HepG2 (cell line): ENCODE measurements at regions of chr11 and their contacts with region 1.

Region 1: DNA sequence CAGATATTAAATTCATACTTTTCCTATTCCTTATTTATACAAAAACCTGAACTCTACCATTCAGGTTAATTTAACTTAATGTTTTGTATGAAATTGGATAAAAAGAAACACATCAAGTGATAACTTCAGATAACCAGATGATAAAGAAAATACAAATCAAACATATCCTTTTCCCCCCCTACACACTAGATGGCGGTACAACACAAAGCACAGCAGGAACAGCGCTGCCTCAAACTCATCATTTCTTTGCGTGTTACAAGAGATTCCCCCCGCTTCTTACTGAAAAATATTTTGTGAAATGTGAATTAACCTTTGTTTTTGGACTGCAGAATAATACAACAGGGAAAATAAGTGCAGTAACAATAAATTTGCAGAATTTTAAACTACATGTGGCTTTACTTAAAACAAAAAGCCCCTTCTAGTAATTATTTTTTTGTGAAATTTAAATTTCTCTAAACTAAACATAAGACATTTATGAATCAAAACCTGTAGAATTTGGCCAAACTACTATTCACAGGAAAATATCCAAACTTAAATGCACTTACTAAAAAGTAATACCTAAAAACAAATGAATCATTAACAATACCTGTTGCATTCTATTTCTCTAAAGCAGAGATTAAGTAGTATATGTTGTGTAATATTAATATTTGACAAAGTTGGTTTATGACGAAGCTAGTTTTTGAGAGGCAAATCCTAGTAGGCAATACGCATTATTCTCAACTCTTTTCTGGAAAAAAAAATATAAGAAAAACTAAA is 74.4 kb downstream of the ARHGAP32 start:
- DNase-seq: peak; percentile 64
- ATAC-seq: peak; percentile 39; the same call in 1 of the 3 replicates
- H3K4me3 ChIP-seq: no peak overlapping the region
- H3K27ac ChIP-seq: no peak overlapping the region
- H3K4me1 ChIP-seq: peaks cover 40% of the 10 kb centered on the region
- H3K27me3 ChIP-seq: no peaks in the 10 kb centered on the region
- CTCF ChIP-seq: peak; percentile 87
- EP300 ChIP-seq: no peak
- POLR2A ChIP-seq: no peak
- RAD21 ChIP-seq: peak; percentile 83

Region 2: DNA sequence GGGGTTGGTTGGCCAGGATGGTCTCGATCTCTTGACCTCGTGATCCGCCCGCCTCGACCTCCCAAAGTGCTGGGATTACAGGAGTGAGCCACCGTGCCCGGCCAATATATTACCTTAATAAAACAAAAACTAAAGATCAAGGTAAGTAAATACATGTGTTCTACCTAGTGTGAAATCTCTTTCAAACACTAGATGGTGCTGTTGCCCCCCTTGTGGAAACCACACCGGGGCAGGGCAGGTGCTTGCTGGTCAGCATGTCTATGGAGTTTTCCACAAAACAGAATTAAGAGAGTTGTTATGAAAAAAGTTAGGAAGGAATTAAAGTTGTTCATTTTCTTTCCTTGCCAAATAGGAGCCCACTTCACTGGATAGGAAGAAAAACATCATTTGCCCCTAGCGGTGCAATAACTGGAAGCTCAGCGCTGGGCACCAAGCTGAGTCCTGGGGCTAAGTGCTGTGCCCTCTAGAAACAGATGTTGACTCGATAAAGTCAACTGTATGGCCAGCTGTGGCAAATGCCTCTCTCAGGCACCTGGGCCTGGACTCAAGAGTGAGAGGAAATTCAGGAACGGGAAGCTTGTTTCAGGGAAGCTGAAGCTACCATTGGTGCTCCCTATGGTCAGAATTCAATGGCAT is 233.0 kb before region 1 on chr11:
- CTCF ChIA-PET with region 1: no interaction called
- POLR2A ChIA-PET with region 1: no interaction called
- in situ Hi-C with region 1: no loop called
- intact Hi-C with region 1: loop called (anchors 2 kb)
- DNase-seq: peak; percentile 54
- ATAC-seq: peak; percentile 90
- H3K4me3 ChIP-seq: no peak overlapping the region
- H3K27ac ChIP-seq: no peak overlapping the region
- H3K4me1 ChIP-seq: no peaks in the 10 kb centered on the region
- H3K27me3 ChIP-seq: peaks cover 3 to 49% of the 10 kb centered on the region in 2 experiments; a peak in 4 of 5 replicates
- CTCF ChIP-seq: peak; percentile 86
- EP300 ChIP-seq: no peak
- POLR2A ChIP-seq: no peak
- RAD21 ChIP-seq: peak; percentile 77

Region 3: DNA sequence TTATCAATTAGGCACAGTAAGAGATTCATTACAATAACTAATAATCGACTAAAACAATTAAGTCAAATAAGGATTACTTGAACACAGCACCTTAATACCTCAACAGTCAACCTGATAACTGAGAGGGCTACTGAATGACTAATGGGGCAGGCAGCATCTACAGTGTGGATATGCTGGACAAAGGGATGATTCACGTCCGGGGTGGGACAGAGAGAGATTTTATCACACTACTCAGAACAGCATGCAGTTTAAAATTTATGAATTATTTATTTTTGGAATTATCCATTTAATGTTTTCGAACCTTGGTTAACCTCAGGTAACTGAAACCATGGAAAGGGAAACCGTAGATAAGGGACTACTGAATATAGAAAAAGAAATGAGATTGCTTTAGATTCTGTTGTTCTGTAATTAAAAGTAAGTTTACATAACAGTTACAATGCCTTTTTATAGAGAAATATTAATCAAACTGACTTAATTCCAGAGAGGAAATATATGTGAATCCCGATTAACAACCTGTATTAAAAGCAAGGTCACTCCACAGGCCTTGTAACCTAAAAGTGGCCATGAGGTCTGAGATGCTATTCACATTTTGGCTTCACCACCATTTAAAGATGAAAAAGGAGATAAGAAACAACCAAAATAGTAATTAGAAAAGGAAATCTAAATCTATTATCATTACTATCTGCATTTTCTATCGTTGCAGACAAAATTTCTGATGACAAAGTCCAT is 56.1 kb before region 1 on chr11:
- CTCF ChIA-PET with region 1: no interaction called
- POLR2A ChIA-PET with region 1: no interaction called
- in situ Hi-C with region 1: no loop called
- intact Hi-C with region 1: no loop called
- DNase-seq: no peak
- ATAC-seq: no peak
- H3K4me3 ChIP-seq: no peak overlapping the region
- H3K27ac ChIP-seq: no peak overlapping the region
- H3K4me1 ChIP-seq: no peaks in the 10 kb centered on the region
- H3K27me3 ChIP-seq: no peaks in the 10 kb centered on the region
- CTCF ChIP-seq: no peak
- EP300 ChIP-seq: no peak
- POLR2A ChIP-seq: no peak
- RAD21 ChIP-seq: no peak

Region 4: DNA sequence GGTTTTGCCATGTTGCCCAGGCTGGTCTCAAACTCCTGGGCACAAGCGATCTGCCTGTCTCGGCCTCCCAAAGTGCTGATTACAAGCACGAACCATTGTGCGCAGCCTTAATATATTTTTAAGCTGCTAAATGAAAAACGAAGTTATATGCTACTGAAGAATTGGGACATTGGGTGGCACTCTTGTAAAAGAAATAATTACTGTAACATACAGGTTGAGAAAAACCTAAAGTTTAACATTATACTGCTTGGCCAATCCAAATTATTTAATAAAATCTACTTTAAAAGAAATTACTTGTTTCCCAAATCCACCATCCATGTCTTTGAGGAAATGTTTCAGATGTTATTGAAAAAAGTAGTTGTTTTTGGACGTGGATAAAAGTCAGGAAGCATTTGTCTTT is 112.2 kb after region 1 on chr11:
- CTCF ChIA-PET with region 1: interaction called, 6 read pairs
- POLR2A ChIA-PET with region 1: no interaction called
- in situ Hi-C with region 1: no loop called
- intact Hi-C with region 1: loop called (anchors 2 kb)
- DNase-seq: no peak
- ATAC-seq: no peak
- H3K4me3 ChIP-seq: no peak overlapping the region
- H3K27ac ChIP-seq: no peak overlapping the region
- H3K4me1 ChIP-seq: peaks cover 5% of the 10 kb centered on the region
- H3K27me3 ChIP-seq: no peaks in the 10 kb centered on the region
- CTCF ChIP-seq: peak; percentile 34; the same call in 1 of the 2 replicates
- EP300 ChIP-seq: no peak
- POLR2A ChIP-seq: no peak
- RAD21 ChIP-seq: no peak; the same call in 1 of the 2 replicates

Region 5: DNA sequence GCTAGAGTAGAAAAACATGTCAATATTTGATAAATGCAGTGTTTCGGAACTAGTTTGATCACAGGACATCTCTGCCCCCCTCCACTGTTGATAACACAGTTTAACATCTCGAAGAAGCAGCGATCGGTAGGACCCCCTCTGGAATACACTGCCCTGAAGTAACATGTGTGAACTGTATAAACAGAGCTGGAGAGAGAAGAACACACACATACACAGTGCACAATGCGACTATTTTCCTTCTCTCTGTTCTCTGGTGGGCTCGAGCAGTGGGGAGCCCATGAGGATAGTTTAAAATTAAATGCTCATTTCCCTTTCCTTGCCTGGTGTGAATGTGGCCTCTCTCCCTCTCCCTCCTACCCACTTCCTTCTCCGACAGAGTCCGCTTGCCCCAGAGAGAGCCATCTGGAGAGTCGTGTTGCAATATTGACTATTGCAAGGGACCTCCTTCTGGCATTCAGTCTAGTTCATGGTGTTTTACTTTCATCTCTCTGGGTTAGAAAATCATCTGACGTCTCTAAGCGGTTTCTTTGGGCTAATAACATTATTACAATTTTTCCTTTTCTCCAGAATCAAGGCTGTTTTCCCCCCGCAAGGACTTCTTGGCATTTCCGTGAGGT is 206.2 kb after region 1 on chr11:
- CTCF ChIA-PET with region 1: no interaction called
- POLR2A ChIA-PET with region 1: no interaction called
- in situ Hi-C with region 1: no loop called
- intact Hi-C with region 1: loop called (anchors 1 kb)
- DNase-seq: peak; percentile 37
- ATAC-seq: peak; percentile 58
- H3K4me3 ChIP-seq: peak overlapping the region; percentile 54 to 61 (median 55)
- H3K27ac ChIP-seq: no peak overlapping the region
- H3K4me1 ChIP-seq: peaks cover 65% of the 10 kb centered on the region
- H3K27me3 ChIP-seq: no peaks in the 10 kb centered on the region; a peak in 1 of 5 replicates
- CTCF ChIP-seq: no peak
- EP300 ChIP-seq: no peak
- POLR2A ChIP-seq: no peak
- RAD21 ChIP-seq: no peak

Region 6: DNA sequence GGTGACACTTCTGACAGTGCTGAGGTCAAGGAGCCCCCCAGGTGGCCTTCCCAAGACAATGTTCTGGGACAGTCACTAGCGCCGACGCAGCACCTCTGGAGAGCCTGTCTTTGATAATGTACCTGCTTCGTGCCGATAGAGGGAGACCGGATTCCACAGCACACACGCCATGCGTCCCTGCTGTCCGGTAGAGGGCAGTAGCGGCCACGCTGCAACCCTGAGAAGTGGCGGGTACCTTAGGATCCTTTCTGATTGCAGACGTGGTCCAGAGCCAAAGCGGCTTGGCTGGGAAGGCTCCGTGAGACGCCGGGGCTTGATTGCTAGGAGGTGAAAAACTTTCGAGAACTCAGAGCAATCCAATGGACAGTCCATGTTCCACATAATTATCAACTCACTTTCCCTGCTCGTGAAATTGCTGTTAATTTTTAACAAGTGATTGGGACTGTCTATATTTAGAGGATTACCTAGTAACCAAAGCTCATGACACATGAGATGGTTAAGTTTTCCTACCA is 246.4 kb after region 1 on chr11:
- CTCF ChIA-PET with region 1: interaction called, 12 read pairs
- POLR2A ChIA-PET with region 1: no interaction called
- in situ Hi-C with region 1: no loop called
- intact Hi-C with region 1: loop called (anchors 1 kb)
- DNase-seq: peak; percentile 80
- ATAC-seq: peak; percentile 100
- H3K4me3 ChIP-seq: peak overlapping the region in 2 of 3 experiments; percentile 3 to 46; a peak in 2 of 6 replicates
- H3K27ac ChIP-seq: no peak overlapping the region
- H3K4me1 ChIP-seq: peaks cover 12% of the 10 kb centered on the region
- H3K27me3 ChIP-seq: peaks cover 0 to 22% of the 10 kb centered on the region in 2 experiments; a peak in 2 of 5 replicates
- CTCF ChIP-seq: peak; percentile 100
- EP300 ChIP-seq: no peak
- POLR2A ChIP-seq: no peak
- RAD21 ChIP-seq: peak; percentile 95